ENCODE measurements at regions of chr5 and their contacts with region 1.

Region 1: GRCh38 chr5:138464008-138464387 is 1.3 kb upstream of the EGR1 start:
- DNase-seq: peak; percentile 93
- H3K4me3 Mint-ChIP-seq: peak overlapping the region; percentile 74
- H3K27ac Mint-ChIP-seq: peak overlapping the region; percentile 96
- H3K4me1 Mint-ChIP-seq: peaks cover 31% of the 10 kb centered on the region
- H3K27me3 Mint-ChIP-seq: peaks cover 42% of the 10 kb centered on the region

Region 2: GRCh38 chr5:138492560-138493045 is 28.6 kb after region 1 on chr5:
- CTCF ChIA-PET with region 1: interaction called, 15 read pairs
- DNase-seq: no peak
- H3K4me3 Mint-ChIP-seq: peak overlapping the region; percentile 80
- H3K27ac Mint-ChIP-seq: no peak overlapping the region
- H3K4me1 Mint-ChIP-seq: peaks cover 10% of the 10 kb centered on the region
- H3K27me3 Mint-ChIP-seq: peaks cover 80% of the 10 kb centered on the region

Region 3: GRCh38 chr5:138498376-138498775 is 34.4 kb after region 1 on chr5:
- CTCF ChIA-PET with region 1: interaction called, 38 read pairs
- DNase-seq: no peak
- H3K4me3 Mint-ChIP-seq: no peak overlapping the region
- H3K27ac Mint-ChIP-seq: no peak overlapping the region
- H3K4me1 Mint-ChIP-seq: no peaks in the 10 kb centered on the region
- H3K27me3 Mint-ChIP-seq: peaks cover 34% of the 10 kb centered on the region

Region 4: DNA sequence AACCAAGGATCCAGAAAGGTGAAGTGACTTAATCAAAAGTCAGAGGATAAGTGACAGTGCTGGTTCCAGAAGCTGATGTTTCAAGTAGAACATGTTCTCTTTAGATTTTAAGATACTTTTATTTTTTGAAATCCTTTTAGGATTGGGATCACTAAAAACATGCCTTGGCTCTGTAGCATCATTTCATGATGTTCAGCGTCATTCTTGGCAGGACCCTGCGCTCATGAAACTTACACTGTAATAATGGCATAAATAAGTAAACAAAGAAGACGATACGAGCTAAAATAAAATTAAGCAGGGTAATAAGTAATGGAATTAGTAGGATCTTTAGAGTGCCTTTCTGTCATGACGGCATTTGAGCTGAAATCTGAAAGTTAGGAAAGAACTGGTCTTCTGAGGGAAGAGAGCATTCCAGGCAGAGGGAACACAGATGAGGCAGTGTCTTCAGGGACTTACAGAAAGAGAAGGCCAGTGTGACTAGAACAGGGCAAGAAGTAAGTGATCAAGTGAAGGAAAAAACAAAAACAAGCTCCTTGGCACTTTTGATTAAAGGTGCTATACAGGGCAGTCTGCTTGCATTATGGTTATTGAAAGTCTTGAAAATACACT is 309.1 kb after region 1 on chr5:
- CTCF ChIA-PET with region 1: no interaction called
- DNase-seq: no peak
- H3K4me3 Mint-ChIP-seq: no peak overlapping the region
- H3K27ac Mint-ChIP-seq: no peak overlapping the region
- H3K4me1 Mint-ChIP-seq: no peaks in the 10 kb centered on the region
- H3K27me3 Mint-ChIP-seq: peaks cover 26% of the 10 kb centered on the region

Region 5: GRCh38 chr5:138824924-138825863 is 361.2 kb after region 1 on chr5:
- CTCF ChIA-PET with region 1: no interaction called
- DNase-seq: no peak
- H3K4me3 Mint-ChIP-seq: no peak overlapping the region
- H3K27ac Mint-ChIP-seq: no peak overlapping the region
- H3K4me1 Mint-ChIP-seq: no peaks in the 10 kb centered on the region
- H3K27me3 Mint-ChIP-seq: peaks cover 5% of the 10 kb centered on the region

Measured in activated naive CD4-positive, alpha-beta T cell treated with anti-CD3 and anti-CD28 coated beads, Interleukin-2, amount 10 ng/mL, durations not matched to agents 7 days and 5 days (primary cell).